Uterus (tissue), 4 donors: ENCODE measurements at regions of chr17 and their contacts with region 1.

Region 1: DNA sequence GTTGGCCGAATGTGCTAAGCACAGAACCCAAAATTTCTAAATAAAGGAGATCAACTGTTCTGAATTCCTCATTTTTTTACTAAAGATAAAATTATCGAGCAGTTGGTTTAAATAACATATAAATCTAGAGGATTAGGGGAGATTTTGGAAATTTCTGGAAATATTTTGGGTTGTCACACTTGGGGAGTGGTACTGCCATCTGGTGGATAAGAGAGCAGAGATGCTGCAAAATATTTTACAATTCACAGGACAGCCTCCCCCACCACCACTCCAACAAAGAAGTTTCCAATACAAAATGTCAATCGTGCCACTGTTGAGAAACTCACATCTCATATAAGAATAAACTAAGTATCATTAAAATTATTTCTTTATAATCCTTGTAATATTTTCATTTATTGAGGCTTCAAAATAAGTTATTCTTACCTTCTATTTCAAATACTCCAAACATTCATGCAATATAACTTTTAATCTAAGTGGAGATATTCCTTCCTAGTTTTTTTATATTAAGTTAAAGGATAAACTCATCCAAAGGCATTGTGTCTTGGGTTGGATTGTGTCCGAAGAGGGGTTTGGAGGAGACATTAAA is 17.0 kb upstream of the ABCA8 start:
- DNase-seq: no peak
- H3K4me3 ChIP-seq: no peak overlapping the region
- H3K27ac ChIP-seq: no peak overlapping the region
- H3K4me1 ChIP-seq: no peaks in the 10 kb centered on the region
- H3K27me3 ChIP-seq: no peaks in the 10 kb centered on the region
- CTCF ChIP-seq: peak; percentile 51 to 68 (median 62)
- POLR2A ChIP-seq: no peak

Region 2: GRCh38 chr17:68771867-68772515 is 200.2 kb before region 1 on chr17:
- intact Hi-C with region 1: loop called (anchors 10 kb)
- DNase-seq: peak in 1 of 2 donors; percentile 51
- H3K4me3 ChIP-seq: peak overlapping the region in 1 of 2 donors; percentile 10
- H3K27ac ChIP-seq: peak overlapping the region; percentile 60 to 61
- H3K4me1 ChIP-seq: peaks cover 0 to 5% of the 10 kb centered on the region in 2 donors
- H3K27me3 ChIP-seq: no peaks in the 10 kb centered on the region
- CTCF ChIP-seq: peak; percentile 51 to 79 (median 72)
- POLR2A ChIP-seq: no peak